Calu3 (cell line): ENCODE measurements at regions of chr5 and their contacts with region 1.

Region 1: DNA sequence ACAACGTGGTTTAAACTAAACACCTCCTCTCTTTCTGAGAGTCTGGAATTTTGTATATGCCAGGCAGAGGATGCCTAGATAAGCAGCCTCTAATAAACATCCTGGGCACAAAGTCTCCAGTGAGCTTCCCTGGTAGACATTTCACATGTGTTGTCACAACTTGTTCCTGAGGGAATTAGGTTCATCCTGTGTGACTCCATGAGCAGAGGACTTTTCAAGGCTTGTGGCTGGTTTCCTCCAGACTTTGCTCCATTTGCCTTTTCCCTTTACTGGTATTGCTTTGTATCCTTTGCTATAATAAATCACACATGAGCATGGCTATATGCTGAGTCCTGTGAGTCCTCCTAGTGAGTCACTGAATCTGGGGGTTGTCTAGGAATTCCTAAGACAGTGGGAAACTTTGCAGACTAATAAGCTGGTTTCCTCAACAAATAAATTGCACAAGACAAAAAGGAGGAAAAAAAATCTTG is 77.4 kb downstream of the NR2F1-AS1 start:
- DNase-seq: no peak
- H3K4me3 Mint-ChIP-seq: no peak overlapping the region
- H3K27ac Mint-ChIP-seq: no peak overlapping the region
- H3K4me1 Mint-ChIP-seq: no peaks in the 10 kb centered on the region
- H3K27me3 Mint-ChIP-seq: no peaks in the 10 kb centered on the region
- CTCF ChIP-seq: no peak

Region 2: GRCh38 chr5:93476251-93476742 is 27.3 kb before region 1 on chr5:
- CTCF ChIA-PET with region 1: no interaction called
- intact Hi-C with region 1: loop called (anchors 1 kb)
- DNase-seq: no peak
- H3K4me3 Mint-ChIP-seq: no peak overlapping the region
- H3K27ac Mint-ChIP-seq: no peak overlapping the region
- H3K4me1 Mint-ChIP-seq: peaks cover 7% of the 10 kb centered on the region
- H3K27me3 Mint-ChIP-seq: no peaks in the 10 kb centered on the region
- CTCF ChIP-seq: no peak